ENCODE measurements at regions of chr22 and their contacts with region 1.

Region 1: GRCh38 chr22:24230911-24231656 is 13.8 kb downstream of the GGT5 start:
- DNase-seq: no peak
- H3K4me3 ChIP-seq: no peak overlapping the region
- H3K27me3 ChIP-seq: no peaks in the 10 kb centered on the region
- CTCF ChIP-seq: peak; percentile 27; the same call in 1 of the 2 replicates

Region 2: DNA sequence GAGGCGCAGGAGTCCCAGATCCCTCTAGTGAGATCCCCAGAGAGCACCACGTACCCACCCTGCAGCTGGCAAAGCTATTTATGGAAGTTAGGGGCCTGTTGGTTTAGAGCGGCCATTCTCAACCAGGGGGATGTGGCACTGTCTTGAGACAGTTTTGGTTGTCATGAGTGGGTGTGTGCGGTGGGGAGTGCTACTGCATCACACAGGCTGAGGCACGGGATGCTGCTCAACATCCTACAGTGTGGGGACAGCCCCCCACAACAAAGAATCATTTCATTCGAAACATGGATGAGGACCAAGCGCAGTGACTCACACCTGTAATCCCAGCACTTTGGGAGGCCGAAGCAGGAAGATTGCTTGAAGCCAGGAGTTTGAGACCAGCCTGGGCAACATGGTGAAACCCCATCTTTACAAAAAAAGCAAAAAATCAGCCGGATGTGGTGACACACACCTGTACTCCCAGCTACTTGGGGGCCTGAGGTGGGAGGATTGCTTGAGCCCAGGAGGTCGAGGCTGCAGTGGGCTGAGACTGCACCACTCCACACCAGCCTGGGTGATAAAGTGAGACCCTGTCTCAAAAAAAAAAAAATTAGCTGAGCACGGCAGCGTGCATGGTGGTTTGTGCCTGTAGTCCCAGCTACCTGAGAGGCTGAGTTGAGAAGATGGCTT is 14.4 kb before region 1 on chr22:
- CTCF ChIA-PET with region 1: interaction called, 15 read pairs
- POLR2A ChIA-PET with region 1: no interaction called
- DNase-seq: no peak
- H3K4me3 ChIP-seq: no peak overlapping the region
- H3K27me3 ChIP-seq: no peaks in the 10 kb centered on the region
- CTCF ChIP-seq: no peak